ENCODE measurements at regions of chr12 and their contacts with region 1.

Region 1: GRCh38 chr12:41011939-41012338 is 176.2 kb upstream of the PDZRN4 start:
- DNase-seq: no peak

Region 2: DNA sequence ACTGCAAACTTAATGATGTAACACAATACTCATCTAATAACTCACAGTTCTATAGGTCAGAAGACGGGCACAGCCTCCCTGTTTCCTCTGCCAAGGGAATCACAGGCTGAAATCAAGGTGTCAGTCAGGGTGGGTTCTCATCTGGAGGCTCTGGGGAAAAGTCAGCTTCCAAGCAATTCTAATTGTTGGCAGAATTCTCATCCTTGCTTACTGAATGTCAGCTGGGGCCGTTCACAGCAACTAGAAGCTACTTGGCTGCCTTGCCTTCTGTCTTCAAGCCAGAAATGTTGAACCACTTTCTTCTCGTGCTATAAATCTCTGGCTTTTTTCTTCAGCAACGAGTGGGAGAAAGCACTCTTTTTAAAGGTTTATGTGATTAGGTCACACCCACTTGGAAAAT is 96.1 kb after region 1 on chr12:
- intact Hi-C with region 1: no loop called
- DNase-seq: no peak

Region 3: GRCh38 chr12:41188058-41188840 is 176.3 kb after region 1 on chr12 and contains the start of gene PDZRN4:
- intact Hi-C with region 1: loop called in 1 of 2 experiments (anchors 10 kb)
- DNase-seq: no peak
- total RNA-seq, gene PDZRN4: 26.8 to 32.9 TPM

Region 4: GRCh38 chr12:41367726-41368405 is 355.9 kb after region 1 on chr12:
- intact Hi-C with region 1: loop called in 1 of 2 experiments (anchors 10 kb)
- DNase-seq: no peak

Measured in posterior vena cava (tissue), 2 donors.